ENCODE measurements at regions of chr15 and their contacts with region 1.

Region 1: DNA sequence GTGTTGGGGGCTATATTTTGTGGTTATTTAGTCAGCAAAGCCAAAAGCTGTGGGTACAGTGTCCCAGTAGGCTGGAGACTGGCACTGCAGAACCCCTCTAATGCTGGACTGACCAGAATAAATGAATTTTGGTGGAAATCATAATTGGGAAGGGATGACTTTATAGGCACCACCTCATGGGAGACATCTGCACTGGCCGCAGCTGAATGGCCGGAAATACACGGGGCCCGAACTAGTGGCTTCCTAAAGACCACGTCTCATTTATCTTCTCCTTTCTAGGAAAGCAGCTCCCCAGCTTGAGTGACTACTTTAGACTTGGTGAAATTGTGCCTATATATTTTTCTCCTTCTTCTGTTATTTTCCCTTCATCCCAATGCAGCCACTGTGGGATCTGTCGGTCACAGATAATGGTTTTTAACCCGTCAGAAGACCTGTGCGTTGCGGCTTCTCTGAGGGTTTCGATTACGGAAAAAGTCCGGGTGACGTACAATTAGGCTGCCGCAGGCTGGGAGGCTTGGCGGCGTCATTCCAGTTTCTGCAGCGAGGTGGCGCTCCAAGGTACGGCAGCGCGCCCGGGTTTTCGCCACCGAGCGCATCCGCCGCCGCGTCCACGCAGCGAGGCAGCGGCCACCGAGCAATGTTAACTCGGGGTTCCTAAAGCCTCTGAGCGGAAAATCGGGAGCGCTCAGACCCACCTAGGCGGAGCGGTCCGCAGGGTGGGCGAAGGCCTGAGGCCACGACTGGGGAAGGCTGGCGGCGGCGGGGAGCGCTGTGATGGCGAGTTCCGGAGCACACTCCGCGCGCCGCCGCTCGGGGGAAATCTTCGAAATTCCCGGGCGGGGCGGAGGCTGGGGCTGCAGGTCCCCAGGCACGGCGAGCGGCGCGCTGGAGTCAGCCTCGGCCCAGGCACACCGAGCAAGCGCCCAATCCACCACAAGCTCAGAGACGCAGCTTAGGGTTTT is 26.3 kb downstream of the NR2F2 start:
- DNase-seq: peak; percentile 91
- ATAC-seq: peak; percentile 59

Region 2: GRCh38 chr15:94670438-94671034 is 1686.2 kb before region 1 on chr15:
- intact Hi-C with region 1: loop called (anchors 5 kb)
- DNase-seq: no peak
- ATAC-seq: no peak

Region 3: DNA sequence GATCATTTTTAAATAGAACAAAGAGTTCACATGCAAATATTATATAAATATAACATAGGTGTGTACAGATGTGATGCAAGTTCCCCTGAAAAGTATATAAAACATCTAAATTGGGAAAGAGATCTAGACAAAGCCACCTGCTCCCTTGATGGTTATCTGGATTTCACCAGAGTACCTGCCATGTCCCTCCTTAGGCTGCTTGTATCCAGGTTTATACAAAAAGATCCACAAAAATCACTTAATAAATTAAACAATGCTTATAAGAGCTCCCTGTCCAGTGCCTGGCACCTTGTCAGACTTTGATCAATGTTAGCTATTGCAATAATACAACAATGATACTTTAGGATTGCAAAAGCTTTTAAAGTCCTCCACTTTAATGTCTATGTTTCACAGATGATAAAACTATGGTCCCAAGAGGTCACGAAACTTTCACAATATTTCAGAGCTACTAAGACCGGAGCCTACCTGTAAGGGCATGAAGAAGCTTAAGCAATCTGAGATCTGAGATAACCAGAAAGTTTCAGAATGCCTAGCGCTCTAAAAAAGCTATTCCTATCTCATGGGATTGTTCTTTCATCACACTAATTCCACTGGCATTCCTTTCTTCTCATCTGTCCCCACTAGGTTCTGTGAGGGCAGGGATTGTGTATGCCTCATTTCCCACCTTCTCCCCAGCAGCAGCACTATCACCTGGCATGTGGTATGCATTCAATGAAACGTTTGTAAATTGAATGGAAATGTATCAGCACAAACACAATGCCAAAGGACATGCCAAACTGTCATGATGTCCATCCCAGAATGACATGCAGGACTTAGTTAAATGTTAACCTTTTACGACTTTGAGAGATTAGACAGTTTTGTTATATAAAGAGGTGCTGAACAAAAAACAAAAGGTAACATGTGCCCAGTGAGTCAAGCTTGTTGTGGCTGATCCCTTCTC is 131.2 kb before region 1 on chr15:
- intact Hi-C with region 1: no loop called
- DNase-seq: no peak
- ATAC-seq: no peak

Region 4: DNA sequence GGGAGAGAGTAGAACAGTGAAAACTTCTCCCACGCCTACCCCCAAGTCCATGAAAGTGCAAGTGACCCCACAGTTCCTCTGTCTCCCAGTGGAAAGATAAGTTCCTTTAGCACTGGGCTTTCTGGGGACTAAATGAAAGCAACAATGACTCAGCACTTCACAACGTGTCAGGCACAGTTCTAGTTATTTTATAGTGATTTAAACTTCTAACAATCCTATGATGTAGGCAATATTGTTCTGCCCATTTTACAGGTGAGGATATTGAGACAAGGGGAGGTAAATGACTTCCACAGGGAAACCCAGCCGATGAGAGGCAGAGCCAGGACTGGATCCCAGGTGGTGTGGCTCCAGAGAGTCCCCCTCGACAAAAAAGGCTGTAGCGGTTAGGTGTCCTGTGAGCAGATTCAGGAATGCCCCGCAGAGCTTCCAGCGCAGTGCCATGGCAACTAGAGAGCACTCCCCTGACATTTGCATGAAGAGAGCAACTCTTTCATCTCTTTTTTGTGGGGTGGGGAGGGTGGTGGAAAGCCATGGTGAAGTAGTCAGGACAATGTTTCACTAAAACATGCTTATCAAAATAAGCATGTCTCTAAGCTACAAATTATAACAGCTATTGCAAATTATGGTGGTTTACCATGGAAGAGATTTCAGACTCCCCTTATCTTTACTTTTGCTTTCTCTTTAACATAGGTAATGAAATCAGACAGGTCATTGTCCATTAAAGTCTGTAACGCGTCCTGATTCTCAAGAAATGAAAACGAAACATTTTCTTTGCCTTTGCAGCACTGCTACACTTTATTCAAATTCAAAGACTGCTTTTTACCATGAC is 35.8 kb after region 1 on chr15:
- intact Hi-C with region 1: no loop called
- DNase-seq: no peak
- ATAC-seq: no peak

Region 5: DNA sequence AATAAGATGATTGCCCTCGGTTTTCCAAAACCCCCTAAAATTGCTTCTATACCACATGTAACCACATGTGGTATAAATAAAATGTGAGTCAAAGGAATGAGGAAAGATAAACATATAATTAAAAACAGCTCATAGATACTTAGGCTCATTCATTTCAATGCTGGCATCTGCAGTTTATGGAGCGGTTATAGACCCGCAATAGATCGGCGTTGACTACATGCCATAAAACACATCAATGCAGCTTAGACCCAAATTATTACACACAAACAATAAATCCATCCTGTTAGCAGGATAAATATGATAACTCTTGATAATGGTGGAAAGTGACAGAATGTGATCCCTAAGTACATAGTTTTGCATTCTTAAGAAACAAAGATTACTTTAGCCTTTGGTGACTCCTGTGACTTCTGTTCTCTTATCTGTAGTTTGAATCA is 117.5 kb after region 1 on chr15:
- intact Hi-C with region 1: no loop called
- DNase-seq: no peak
- ATAC-seq: no peak

Region 6: DNA sequence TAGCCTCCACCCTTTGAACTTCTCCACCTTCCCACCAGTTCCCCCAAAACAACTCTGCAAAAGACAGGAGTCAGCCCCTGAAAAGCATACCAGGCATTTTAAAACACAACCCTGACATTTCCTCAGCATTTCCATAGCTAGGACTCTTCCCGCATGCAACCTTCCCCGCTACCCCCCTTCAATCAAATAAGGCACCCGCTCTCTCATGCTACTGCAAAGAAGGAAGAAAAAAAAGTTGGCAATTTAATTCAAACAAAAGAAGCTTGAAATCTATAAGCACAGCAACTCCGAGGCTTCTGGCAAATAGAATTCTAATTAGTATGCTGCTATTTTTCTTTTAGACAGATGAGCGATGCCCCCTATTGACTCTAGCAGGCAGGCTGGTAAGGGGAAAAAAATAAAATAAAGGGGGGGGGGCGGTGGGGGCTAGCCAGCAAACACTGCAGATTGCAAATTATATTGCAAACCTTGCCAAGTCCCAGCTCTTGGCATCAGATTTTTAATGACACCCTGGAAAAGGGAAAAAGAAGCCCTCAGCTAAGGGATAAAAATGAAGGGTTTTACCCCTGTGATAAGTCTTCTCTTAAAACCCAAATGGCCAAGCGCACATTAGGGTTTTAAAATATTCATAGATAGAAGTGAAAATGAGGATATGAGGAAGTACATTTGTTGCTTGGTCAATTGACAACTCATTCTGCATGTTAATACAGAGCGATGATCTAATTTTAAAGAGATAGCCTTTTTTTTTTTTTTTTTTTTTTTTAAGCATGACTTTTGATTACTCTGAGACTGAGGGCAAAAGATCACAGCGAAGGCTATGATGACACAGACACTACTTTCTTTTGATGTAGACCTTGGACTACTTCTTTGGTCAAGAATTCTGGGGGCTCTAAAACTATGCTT is 229.0 kb after region 1 on chr15:
- intact Hi-C with region 1: loop called (anchors 2 kb)
- DNase-seq: no peak
- ATAC-seq: no peak

Region 7: DNA sequence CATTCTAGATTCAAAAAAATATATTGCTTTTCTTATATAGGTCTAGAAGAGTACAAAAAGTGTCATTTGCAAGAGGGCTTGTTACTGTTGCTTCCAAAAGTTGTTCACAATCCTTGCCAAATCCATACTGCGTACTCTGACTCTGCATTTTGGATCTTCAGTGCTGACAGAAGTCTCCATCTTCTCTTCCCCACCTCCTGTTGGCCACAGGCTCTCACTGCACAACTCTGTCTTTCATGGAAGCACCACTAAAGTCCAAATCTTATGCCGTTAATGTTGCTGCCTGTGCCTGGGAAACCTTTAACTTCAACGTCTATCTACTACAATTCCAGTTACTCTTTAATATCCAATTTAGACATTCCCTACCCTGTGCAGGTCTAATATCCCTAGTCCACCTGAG is 393.6 kb after region 1 on chr15:
- intact Hi-C with region 1: no loop called
- DNase-seq: no peak
- ATAC-seq: no peak

Region 8: GRCh38 chr15:96893159-96893906 is 536.6 kb after region 1 on chr15:
- intact Hi-C with region 1: loop called (anchors 5 kb)
- DNase-seq: no peak
- ATAC-seq: no peak

Region 9: GRCh38 chr15:97234851-97235610 is 878.3 kb after region 1 on chr15:
- intact Hi-C with region 1: loop called (anchors 1 kb)
- DNase-seq: peak; percentile 7
- ATAC-seq: no peak

Region 10: GRCh38 chr15:97759363-97759762 is 1402.6 kb after region 1 on chr15:
- intact Hi-C with region 1: loop called (anchors 5 kb)
- DNase-seq: no peak
- ATAC-seq: no peak